HepG2 (cell line): ENCODE measurements at regions of chr10 and their contacts with region 1.

Region 1: GRCh38 chr10:92712016-92712889 is 22.5 kb downstream of the HHEX start:
- DNase-seq: no peak
- ATAC-seq: peak; percentile 58
- H3K4me3 ChIP-seq: no peak overlapping the region
- H3K27ac ChIP-seq: no peak overlapping the region
- H3K4me1 ChIP-seq: peaks cover 48% of the 10 kb centered on the region
- H3K27me3 ChIP-seq: peaks cover 5 to 25% of the 10 kb centered on the region in 2 experiments
- CTCF ChIP-seq: no peak
- EP300 ChIP-seq: no peak
- POLR2A ChIP-seq: no peak
- RAD21 ChIP-seq: no peak

Region 2: DNA sequence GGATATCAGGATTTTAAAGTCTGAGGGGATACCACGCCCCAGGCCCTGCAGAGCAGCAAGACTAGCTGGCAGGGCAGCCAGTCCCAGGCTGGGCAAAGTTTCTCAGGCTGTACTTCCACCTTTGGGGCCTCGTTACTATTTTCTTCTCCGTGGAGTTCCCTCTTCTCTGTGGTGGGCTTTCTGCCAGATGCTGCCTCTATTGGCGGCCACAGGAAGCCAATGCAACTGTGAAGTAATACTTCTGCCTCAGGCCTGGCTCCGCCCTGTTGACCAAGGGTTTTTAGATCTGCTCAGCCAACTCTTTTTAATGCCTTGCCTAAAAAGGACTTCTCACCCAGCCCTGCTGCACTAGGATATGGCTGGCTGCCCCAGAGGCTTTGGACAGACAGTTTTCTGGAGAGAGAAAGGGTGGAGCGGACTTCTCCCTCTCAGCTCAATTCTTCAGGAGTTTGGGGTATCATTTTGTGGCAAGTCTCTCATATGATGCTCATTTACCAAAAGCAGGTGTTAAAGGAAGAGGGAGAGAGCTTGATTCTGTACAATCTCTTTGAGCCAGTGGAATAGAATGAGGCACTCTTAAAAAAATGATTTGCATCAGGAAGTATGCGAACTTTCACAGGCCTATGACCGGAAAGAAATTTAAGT is 44.9 kb after region 1 on chr10:
- CTCF ChIA-PET with region 1: no interaction called
- POLR2A ChIA-PET with region 1: no interaction called
- in situ Hi-C with region 1: no loop called
- intact Hi-C with region 1: loop called (anchors 2 kb)
- DNase-seq: peak; percentile 72
- ATAC-seq: peak; percentile 87
- H3K4me3 ChIP-seq: peak overlapping the region; percentile 17 to 60 (median 37); a peak in 5 of 6 replicates
- H3K27ac ChIP-seq: peak overlapping the region; percentile 41
- H3K4me1 ChIP-seq: peaks cover 64% of the 10 kb centered on the region
- H3K27me3 ChIP-seq: 0 out of 5 replicates have a peak, but pooled peaks cover 0 to 2% of the 10 kb centered on the region in 2 experiments
- CTCF ChIP-seq: peak; percentile 51
- EP300 ChIP-seq: no peak
- POLR2A ChIP-seq: no peak
- RAD21 ChIP-seq: 0 out of 2 replicates have a peak, but pooled peaks have one; percentile 29